ENCODE measurements at regions of chr3 and their contacts with region 1.

Region 1: DNA sequence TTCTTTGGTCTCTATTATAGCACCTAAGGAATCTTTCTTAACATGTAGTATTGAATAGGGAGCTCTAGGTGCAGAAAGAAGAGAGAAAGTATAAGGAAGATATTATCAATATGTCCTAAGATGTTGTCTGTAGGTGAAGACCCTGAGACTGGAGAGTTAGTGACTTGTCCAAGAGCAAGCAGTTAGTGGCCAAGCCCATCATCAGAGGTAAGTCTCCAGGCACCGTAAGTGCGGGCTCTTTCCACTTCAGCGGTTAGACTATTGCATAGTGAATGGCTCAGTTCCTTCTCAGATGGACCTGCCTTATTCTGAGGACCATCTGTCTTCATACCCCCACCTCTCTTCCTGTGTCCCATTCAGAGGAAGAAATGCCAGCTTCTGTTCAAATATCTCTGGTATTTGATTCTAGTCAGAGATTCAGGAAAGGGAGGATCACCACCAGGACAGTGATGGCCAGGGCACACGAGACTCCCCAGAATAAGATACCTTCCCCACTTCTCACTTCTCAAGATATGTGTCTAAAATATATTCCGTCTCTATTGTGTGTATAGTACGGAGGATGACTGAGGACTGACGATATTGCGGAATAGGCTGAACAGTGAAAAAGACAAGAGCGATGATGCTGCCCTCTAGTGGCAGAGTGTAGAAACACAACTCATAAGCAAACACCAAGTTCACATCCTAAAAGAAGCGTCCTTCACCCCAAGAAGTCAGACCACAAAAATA is 19.1 kb upstream of the ADGRG7 start:
- DNase-seq: no peak
- ATAC-seq: peak; percentile 91

Region 2: GRCh38 chr3:99833617-99834205 is 756.6 kb before region 1 on chr3:
- intact Hi-C with region 1: loop called (anchors 2 kb)
- DNase-seq: no peak
- ATAC-seq: peak; percentile 34

Region 3: GRCh38 chr3:100316641-100317069 is 273.6 kb before region 1 on chr3:
- intact Hi-C with region 1: loop called (anchors 10 kb)
- DNase-seq: no peak
- ATAC-seq: peak; percentile 87

Region 4: DNA sequence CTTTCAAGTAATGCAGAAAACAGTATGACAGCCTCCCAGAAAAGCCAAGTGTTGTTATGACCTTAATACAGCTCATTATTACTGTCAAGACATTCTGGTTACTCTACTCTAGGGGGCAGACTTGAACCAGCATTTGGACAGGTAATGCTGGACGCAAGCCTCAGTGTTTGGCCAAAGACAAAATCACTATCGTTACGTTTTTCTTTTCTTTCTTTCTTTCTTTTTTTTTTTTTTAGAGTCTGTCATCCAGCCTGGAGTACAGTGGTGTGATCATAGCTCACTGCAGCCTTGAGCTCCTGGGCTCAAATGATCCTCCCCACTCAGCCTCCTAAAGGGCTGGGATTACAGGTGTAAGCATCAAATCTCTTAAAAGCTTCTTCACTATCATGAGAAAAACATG is 127.3 kb before region 1 on chr3:
- intact Hi-C with region 1: loop called (anchors 5 kb)
- DNase-seq: no peak
- ATAC-seq: peak; percentile 92

Region 5: DNA sequence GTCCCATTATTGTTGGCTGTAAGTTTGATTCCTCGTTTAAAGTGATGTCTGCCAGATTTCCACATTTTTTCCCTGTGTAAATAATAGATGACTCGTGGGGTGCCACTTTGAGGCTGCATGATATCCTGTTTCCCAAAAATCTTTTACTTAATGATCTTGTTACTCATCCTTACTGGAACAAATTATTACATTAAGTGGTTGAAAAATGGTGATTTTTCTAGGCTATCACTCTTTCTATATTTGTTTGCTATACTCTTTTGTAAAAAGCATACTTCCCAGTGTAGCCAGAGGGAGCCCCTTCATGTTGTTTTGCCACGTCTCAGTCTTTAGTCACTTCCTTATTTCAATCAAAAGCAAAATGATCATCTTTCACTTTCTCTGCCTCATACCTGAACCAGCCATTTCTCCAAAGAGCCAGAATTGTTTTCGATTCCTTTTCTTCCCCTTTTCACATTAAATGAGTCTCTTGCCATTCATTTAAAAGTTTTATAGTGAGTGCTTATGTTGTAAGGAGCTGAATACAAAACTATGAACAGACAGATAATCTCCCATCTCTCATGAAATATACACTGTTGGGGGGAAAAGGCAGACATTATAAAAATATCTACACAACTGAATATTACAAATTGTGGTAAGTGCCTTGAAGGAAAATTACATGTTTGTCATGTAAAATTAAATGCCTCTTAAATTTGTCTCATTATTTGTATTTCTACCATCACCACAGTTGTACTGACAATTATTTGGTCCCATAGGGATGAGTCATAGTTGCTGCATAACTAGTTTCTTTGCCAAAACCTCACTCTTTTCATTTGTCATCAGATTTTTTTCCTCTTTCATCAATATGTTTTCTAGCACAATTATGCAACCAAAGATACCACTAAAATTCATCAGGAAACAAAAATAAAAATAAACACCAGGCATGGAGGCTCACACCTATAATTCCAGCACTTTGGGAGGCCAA is 60.7 kb after region 1 on chr3:
- intact Hi-C with region 1: no loop called
- DNase-seq: no peak
- ATAC-seq: peak; percentile 71